ENCODE measurements at regions of chr1 and their contacts with region 1.

Region 1: GRCh38 chr1:150561974-150562445 is 12.8 kb downstream of the ADAMTSL4 start:
- DNase-seq: peak; percentile 98
- H3K4me3 Mint-ChIP-seq: peak overlapping the region; percentile 74
- H3K27ac Mint-ChIP-seq: peak overlapping the region; percentile 99
- H3K4me1 Mint-ChIP-seq: peaks cover 52% of the 10 kb centered on the region
- H3K27me3 Mint-ChIP-seq: no peaks in the 10 kb centered on the region
- CTCF ChIP-seq: no peak

Region 2: DNA sequence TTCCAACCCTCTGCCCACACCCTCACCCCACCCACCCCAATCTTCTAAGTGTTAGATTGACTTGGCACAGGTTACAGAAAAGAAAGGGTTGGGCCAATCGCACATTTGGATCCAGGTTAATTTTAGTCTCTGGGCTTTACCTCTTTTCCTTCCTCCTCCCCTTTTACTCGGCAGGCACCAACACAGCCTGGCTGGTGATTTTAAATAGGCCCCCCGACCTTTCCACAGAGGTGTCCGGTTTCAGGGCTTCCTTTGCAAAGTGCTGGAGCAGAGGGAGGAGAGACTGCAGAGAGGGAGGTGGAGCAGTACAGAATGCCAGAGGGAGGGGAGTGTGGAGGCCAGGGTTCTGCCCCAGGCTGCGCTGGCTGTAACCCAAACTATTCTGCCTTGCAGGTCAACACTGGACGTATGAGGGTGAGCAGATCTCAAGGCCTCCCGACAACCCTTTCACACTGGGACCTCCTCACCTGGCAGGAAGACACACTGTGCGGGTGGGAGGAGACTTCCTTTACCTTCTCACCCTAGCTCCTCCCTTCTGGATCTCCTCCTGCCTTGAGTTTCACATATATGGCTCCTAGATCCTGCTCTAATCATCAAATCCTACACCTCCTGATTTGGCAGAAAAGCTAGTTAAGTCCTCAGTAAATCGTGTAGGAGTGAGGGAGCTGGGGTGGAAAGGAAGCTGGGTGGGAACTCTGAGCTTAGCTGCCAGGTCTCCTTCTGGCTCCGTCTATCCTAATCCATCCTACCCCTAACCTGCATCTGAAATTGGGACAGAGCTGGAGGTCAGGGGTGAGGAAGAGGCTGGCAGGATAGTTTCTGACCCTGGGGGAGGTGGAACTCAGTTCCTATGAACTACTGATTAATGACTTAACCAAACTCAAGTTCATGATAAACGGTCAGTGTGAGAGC is 302.0 kb before region 1 on chr1:
- CTCF ChIA-PET with region 1: interaction called, 7 read pairs
- POLR2A ChIA-PET with region 1: interaction called, 3 read pairs
- intact Hi-C with region 1: loop called (anchors 5 kb)
- DNase-seq: peak; percentile 89
- H3K4me3 Mint-ChIP-seq: peak overlapping the region; percentile 64
- H3K27ac Mint-ChIP-seq: peak overlapping the region; percentile 47
- H3K4me1 Mint-ChIP-seq: peaks cover 66% of the 10 kb centered on the region
- H3K27me3 Mint-ChIP-seq: no peaks in the 10 kb centered on the region
- CTCF ChIP-seq: no peak

Region 3: GRCh38 chr1:150404465-150404864 is 157.5 kb before region 1 on chr1:
- CTCF ChIA-PET with region 1: no interaction called
- POLR2A ChIA-PET with region 1: no interaction called
- intact Hi-C with region 1: no loop called
- DNase-seq: no peak
- H3K4me3 Mint-ChIP-seq: no peak overlapping the region
- H3K27ac Mint-ChIP-seq: no peak overlapping the region
- H3K4me1 Mint-ChIP-seq: peaks cover 22% of the 10 kb centered on the region
- H3K27me3 Mint-ChIP-seq: no peaks in the 10 kb centered on the region
- CTCF ChIP-seq: no peak

Region 4: DNA sequence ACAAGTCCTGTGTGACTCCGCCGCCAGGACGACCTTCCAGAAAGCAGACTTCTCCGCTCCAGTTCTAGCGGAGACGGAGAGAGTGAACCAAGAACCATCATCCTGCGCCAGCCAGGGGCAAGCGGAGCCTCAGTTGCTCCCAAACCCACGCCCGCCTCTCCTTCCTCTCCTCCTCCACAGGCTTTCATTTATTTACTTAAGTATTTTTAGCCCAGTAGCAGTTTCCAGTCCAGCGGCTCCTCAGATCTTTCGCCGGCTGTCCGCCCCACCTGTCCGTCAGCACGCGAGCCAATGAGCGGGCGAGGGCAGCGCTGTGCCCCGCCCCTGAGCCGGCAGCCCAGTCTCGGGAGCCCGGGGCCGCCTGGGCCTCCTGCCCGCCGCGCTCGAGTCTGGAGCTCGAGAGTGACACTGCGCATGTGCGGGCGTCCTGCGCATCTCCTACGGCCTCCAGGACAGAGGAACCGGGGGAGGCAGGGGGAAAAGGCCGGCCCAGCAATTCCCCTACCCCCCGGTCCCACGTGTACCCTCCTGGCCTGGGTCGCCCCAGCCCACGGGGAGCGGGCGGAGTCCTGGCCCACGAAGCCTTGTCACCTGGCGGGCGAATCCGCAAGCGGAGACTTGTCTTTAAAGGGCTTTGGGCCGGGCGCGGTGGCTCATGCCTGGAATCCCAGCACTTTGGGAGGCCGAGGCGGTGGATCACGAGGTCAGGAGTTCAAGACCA is 46.5 kb before region 1 on chr1 and contains the start of gene FALEC:
- CTCF ChIA-PET with region 1: interaction called, 7 read pairs
- POLR2A ChIA-PET with region 1: interaction called, 9 read pairs
- intact Hi-C with region 1: loop called (anchors 1 kb)
- DNase-seq: peak; percentile 98
- H3K4me3 Mint-ChIP-seq: peak within 1 kb of the TSS; percentile 69
- H3K27ac Mint-ChIP-seq: peak within 1 kb of the TSS; percentile 36
- H3K4me1 Mint-ChIP-seq: peaks cover 10% of the 10 kb centered on the region
- H3K27me3 Mint-ChIP-seq: no peaks in the 10 kb centered on the region
- CTCF ChIP-seq: no peak
- total RNA-seq, gene FALEC: not detected in 2 replicates

Region 5: DNA sequence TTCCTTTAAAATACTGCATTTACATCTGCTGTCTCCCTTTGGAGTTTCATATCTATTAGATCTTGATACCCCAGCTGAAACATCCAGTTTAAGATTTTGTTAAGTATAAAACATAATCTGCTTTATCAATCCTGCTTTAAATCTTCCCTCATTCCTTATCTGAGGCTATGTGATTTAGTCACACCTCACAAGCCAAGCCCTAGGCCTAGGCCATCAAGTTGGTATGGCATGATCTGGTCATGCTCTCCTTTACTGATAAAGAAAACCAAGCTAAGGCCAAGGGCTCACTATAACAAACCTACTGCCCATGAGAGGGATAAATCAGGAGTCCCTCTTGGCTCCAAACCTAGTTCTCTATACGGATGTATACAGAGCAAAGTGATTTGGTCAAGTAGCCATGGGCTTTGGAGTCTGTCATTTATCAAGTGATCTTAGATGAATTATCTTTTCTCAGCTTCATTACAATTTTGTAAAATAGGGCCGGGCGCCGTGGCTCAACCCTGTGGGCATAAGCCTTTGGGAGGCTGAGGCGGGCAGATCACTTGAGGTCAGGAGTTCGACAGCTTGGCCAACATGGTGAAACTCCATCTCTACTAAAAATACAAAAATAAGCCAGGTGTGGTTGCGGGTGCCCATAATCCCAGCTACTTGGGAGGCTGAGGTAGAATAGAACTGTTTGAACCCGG is 44.6 kb after region 1 on chr1:
- CTCF ChIA-PET with region 1: interaction called, 203 read pairs
- POLR2A ChIA-PET with region 1: interaction called, 1,125 read pairs
- intact Hi-C with region 1: no loop called
- DNase-seq: no peak
- H3K4me3 Mint-ChIP-seq: no peak overlapping the region
- H3K27ac Mint-ChIP-seq: no peak overlapping the region
- H3K4me1 Mint-ChIP-seq: peaks cover 29% of the 10 kb centered on the region
- H3K27me3 Mint-ChIP-seq: no peaks in the 10 kb centered on the region
- CTCF ChIP-seq: no peak

Region 6: DNA sequence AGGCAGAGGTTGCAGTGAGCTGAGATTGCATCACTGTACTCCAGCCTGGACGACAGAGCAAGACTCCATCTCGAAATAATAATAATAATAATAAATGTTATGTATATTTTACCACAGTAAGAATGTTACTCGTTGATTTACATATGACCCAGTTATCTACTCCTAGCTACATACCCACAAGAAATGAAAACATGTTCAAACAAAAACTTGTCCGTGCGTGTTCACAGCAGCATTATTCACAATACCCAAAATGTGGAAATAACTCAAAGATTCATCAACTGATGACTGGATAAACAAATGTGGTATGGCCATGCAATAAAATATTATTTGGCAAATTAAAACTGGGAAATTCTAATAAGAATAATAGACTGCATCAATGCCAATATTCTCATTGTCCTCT is 99.1 kb after region 1 on chr1:
- CTCF ChIA-PET with region 1: interaction called, 5 read pairs
- POLR2A ChIA-PET with region 1: interaction called, 13 read pairs
- intact Hi-C with region 1: no loop called
- DNase-seq: peak; percentile 46
- H3K4me3 Mint-ChIP-seq: no peak overlapping the region
- H3K27ac Mint-ChIP-seq: peak overlapping the region; percentile 65
- H3K4me1 Mint-ChIP-seq: peaks cover 13% of the 10 kb centered on the region
- H3K27me3 Mint-ChIP-seq: no peaks in the 10 kb centered on the region
- CTCF ChIP-seq: no peak

Region 7: GRCh38 chr1:150778409-150778808 is 216.4 kb after region 1 on chr1:
- CTCF ChIA-PET with region 1: no interaction called
- POLR2A ChIA-PET with region 1: no interaction called
- intact Hi-C with region 1: no loop called
- DNase-seq: no peak
- H3K4me3 Mint-ChIP-seq: no peak overlapping the region
- H3K27ac Mint-ChIP-seq: no peak overlapping the region
- H3K4me1 Mint-ChIP-seq: no peaks in the 10 kb centered on the region
- H3K27me3 Mint-ChIP-seq: no peaks in the 10 kb centered on the region
- CTCF ChIP-seq: no peak

Region 8: DNA sequence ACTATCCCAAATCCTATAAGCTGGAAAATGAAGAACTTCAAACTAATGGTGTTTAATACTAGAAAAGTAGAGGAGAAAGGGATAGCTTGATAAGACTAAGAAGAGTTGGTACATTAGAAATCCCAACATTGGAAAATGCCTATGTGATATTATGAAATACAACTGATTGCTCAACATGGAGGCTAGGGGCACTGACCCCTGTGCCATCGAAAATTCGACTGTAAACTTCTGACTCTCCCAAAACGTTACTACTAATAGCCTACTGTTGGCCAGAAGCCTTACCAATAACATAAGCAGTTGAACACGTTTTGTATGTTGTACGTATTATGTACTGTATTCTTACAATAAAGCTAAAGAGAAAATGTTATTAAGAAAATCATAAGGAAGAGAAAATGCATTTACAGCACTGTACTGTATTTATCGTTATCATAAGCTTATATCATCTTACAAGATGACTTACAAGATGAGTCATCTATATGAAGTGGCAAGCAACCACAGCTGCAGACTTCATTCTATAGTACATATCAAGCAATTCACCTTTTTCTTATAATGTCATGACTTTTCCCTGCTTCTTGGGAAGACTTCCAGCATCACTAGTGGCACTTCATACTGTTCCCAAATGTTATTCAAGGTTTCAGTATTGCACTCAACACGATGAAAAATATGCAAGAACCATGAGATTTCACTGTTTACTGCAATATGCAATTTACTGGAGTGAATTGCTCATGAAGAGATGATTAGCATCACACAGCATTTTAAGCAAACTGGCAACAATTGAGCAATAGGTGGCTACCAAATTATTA is 258.9 kb after region 1 on chr1:
- CTCF ChIA-PET with region 1: interaction called, 10 read pairs
- POLR2A ChIA-PET with region 1: interaction called, 3 read pairs
- intact Hi-C with region 1: loop called (anchors 2 kb)
- DNase-seq: peak; percentile 63
- H3K4me3 Mint-ChIP-seq: no peak overlapping the region
- H3K27ac Mint-ChIP-seq: no peak overlapping the region
- H3K4me1 Mint-ChIP-seq: peaks cover 11% of the 10 kb centered on the region
- H3K27me3 Mint-ChIP-seq: no peaks in the 10 kb centered on the region
- CTCF ChIP-seq: no peak

Region 9: GRCh38 chr1:151008190-151008860 is 446.3 kb after region 1 on chr1 and contains the start of gene PRUNE1:
- CTCF ChIA-PET with region 1: interaction called, 10 read pairs
- POLR2A ChIA-PET with region 1: interaction called, 4 read pairs
- intact Hi-C with region 1: loop called (anchors 5 kb)
- DNase-seq: peak; percentile 97
- H3K4me3 Mint-ChIP-seq: peak within 1 kb of the TSS; percentile 94
- H3K27ac Mint-ChIP-seq: peak within 1 kb of the TSS; percentile 99
- H3K4me1 Mint-ChIP-seq: peaks cover 35% of the 10 kb centered on the region
- H3K27me3 Mint-ChIP-seq: no peaks in the 10 kb centered on the region
- CTCF ChIP-seq: no peak
- total RNA-seq, gene PRUNE1: 17.6 and 24.1 TPM in 2 replicates

Measured in MCF 10A (cell line).